Left ventricle myocardium superior (tissue), 1 donor: ENCODE measurements at regions of chr4 and their contacts with region 1.

Region 1: DNA sequence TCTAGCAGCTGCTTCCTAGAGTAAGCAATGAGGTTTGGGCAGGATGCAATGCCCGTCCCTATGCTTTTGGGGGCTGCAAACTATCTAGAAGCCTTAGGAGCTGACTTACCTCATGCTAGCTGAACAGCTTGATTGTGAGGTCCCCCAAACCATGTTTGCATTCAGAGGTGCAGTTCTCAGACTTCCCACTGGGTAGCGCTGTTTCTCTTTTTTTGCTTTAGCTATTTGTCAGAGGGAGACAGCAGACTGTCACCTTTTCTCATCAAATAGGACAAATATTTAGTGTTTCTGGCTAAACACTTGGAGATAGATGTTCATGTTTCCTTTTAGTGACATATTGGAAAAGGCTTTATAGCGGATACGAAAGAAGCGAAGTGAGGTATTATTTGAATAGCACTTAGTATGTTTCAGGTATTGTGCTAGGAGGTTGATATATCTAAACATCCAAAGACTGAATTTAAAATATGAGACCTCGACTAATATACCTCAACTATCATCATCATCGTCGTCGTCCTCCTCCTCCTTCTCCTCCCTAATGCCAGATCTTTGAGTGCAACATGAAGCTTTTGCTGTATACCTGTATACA is 18.7 kb upstream of the TMEM192 start:
- DNase-seq: no peak
- ATAC-seq: peak; percentile 68

Region 2: DNA sequence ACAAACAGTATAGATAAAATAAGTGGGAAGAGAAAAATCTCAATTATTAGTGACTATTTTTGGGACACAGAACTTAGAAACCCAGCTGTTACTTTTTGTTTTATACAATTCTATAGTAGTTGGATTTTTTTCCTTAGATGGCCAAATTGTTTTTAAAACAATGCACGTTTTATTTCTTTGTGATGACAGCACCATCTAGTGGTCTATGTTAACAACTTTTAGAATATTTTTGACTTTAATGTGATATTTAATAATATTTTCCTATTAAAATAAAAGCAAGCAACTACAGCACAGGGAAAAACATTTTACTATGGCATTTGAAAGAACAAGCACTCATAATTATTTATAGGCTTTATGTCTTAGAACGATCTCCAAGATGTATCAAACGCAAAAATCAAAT is 383.0 kb before region 1 on chr4:
- intact Hi-C with region 1: no loop called
- DNase-seq: no peak
- ATAC-seq: no peak

Region 3: DNA sequence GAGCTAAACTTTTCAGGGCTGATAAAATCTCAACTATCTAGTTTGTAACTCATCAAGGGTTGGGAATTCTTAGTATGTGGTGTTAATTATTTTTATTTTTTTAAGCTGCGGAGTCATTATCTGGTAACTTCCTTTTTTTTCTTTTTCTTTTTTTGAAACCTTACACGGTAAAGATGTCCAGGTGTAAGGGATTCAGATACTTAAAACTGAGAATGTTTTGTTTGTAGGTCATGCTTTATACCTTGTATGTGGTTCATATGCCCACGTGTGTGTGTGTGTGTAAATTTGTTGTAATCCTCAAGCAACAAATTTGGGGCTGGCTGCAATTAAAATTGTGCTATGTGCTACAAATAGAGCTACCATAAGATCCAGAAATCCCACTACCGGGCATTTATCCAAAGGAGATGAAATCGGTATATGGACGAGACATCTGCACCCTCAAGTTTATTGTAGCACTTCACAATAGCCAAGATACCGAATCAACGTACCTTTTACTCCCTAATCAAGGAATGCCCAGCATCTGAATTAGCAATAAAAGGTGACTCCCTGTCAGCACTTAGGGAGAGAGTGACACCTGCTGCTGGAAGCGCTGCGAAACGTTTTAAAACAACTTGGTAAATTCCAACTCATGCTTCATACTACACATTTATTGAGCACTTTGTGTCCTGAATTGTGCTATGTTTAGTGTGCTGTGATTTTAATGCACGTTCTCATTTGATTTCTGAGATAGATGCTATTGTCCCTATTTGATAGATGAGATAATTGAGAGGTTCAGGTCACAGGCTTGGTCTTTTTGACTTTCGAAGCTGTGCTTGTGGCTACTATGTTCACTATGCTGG is 212.2 kb after region 1 on chr4:
- intact Hi-C with region 1: loop called (anchors 10 kb)
- DNase-seq: peak; percentile 29
- ATAC-seq: no peak

Region 4: GRCh38 chr4:165364452-165365080 is 233.2 kb after region 1 on chr4:
- intact Hi-C with region 1: no loop called
- DNase-seq: no peak
- ATAC-seq: no peak

Region 5: GRCh38 chr4:165464813-165465381 is 333.6 kb after region 1 on chr4:
- intact Hi-C with region 1: loop called (anchors 5 kb)
- DNase-seq: no peak
- ATAC-seq: peak; percentile 55